GM12878 (cell line): ENCODE measurements at regions of chr5 and their contacts with region 1.

Region 1: DNA sequence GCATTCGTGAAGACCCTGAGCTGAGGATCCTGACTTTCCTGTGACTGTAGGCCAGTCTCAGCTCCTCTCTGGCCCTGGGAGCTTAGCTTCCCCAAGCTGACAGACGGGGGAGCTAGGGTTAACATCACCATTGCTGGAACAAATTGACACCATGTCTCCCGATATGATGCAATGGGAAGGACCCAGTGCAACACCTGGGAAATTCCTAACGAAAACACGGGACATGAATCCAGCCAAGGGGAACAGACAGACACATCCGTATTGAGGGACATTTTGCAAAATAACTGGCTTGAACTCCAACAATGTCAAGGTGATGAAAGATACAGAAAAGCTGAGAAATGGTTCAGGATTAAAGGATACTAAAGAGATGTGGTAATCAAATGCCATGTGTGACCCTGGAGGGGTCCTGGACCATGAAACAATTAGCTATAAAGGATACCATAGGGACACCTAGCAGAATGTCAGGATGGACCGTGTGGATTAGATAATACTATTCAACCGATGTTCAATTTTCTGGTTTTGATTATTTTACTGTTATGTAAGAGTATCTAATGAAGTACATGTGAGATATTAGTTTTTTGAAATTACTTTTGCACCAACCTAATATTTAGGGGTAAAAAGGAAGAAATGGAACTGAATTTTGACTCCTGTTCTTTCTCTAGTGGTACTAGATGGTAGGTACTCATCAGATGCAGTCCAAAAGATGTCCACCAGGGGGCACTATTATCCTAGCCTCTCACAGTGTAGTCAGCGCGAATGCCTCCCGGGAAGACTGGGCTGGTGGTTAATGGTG is 52.7 kb downstream of the NDST1 start:
- DNase-seq: peak; percentile 42
- ATAC-seq: peak; percentile 91
- H3K4me3 ChIP-seq: no peak overlapping the region
- H3K27ac ChIP-seq: no peak overlapping the region
- H3K4me1 ChIP-seq: peaks cover 14% of the 10 kb centered on the region
- H3K27me3 ChIP-seq: no peaks in the 10 kb centered on the region
- CTCF ChIP-seq: peak; percentile 75 to 89 (median 86)
- EP300 ChIP-seq: no peak
- POLR2A ChIP-seq: no peak
- RAD21 ChIP-seq: peak; percentile 96

Region 2: GRCh38 chr5:149824846-149825245 is 735.8 kb before region 1 on chr5:
- CTCF ChIA-PET with region 1: no interaction called
- POLR2A ChIA-PET with region 1: no interaction called
- RAD21 ChIA-PET with region 1: no interaction called
- SMC1A ChIA-PET with region 1: no interaction called
- in situ Hi-C with region 1: no loop called
- intact Hi-C with region 1: no loop called
- DNase-seq: no peak
- ATAC-seq: no peak
- H3K4me3 ChIP-seq: no peak overlapping the region
- H3K27ac ChIP-seq: no peak overlapping the region
- H3K4me1 ChIP-seq: no peaks in the 10 kb centered on the region; the same call in 1 of the 2 replicates
- H3K27me3 ChIP-seq: no peaks in the 10 kb centered on the region
- CTCF ChIP-seq: no peak
- EP300 ChIP-seq: no peak
- POLR2A ChIP-seq: no peak
- RAD21 ChIP-seq: no peak

Region 3: GRCh38 chr5:149895416-149896345 is 664.9 kb before region 1 on chr5:
- CTCF ChIA-PET with region 1: no interaction called
- POLR2A ChIA-PET with region 1: no interaction called
- RAD21 ChIA-PET with region 1: no interaction called
- SMC1A ChIA-PET with region 1: no interaction called
- in situ Hi-C with region 1: no loop called
- intact Hi-C with region 1: no loop called
- DNase-seq: no peak
- ATAC-seq: peak; percentile 52; the same call in 2 of the 3 replicates
- H3K4me3 ChIP-seq: no peak overlapping the region
- H3K27ac ChIP-seq: no peak overlapping the region
- H3K4me1 ChIP-seq: no peaks in the 10 kb centered on the region
- H3K27me3 ChIP-seq: no peaks in the 10 kb centered on the region
- CTCF ChIP-seq: no peak
- EP300 ChIP-seq: no peak
- POLR2A ChIP-seq: no peak
- RAD21 ChIP-seq: no peak

Region 4: DNA sequence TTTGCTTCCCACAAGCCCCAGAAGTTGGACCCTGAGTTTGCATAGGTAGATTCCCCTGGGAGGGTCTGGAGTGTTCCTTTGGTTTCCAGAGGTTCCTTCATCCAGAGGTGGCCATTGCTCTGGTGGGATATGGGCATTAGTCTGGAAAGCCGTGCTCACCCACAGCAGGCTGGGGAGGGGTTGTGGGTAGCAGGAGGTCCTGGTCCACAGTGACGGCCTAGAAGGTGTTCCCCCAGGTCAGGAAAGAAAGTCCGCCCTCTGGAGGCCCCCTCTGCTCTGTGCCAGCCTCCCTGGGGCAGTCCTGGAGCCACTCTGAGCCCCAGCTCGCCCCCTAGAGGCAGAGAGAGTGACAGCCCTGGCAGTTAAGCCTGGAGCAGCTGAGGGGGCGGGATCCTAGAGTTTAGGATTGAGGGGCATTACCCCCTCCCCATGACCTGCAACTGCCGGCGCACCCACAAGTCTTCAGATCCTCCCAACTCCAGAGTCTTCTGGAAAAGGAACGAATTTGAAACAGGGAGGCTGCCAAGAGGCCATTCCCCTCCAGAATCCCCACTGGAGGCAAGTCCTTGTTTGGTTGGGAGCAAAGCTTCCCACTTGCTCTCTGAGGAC is 15.9 kb before region 1 on chr5:
- CTCF ChIA-PET with region 1: interaction called, 22 read pairs
- POLR2A ChIA-PET with region 1: no interaction called
- RAD21 ChIA-PET with region 1: interaction called, 5 read pairs
- SMC1A ChIA-PET with region 1: interaction called, 7 read pairs
- in situ Hi-C with region 1: no loop called
- intact Hi-C with region 1: no loop called
- DNase-seq: peak; percentile 17
- ATAC-seq: peak; percentile 100
- H3K4me3 ChIP-seq: no peak overlapping the region
- H3K27ac ChIP-seq: no peak overlapping the region
- H3K4me1 ChIP-seq: no peaks in the 10 kb centered on the region
- H3K27me3 ChIP-seq: no peaks in the 10 kb centered on the region
- CTCF ChIP-seq: peak; percentile 96 to 99 (median 99); a peak in 5 of 6 replicates
- EP300 ChIP-seq: no peak
- POLR2A ChIP-seq: no peak
- RAD21 ChIP-seq: peak; percentile 87

Region 5: GRCh38 chr5:150656191-150657132 is 95.9 kb after region 1 on chr5:
- CTCF ChIA-PET with region 1: interaction called, 236 read pairs
- POLR2A ChIA-PET with region 1: interaction called, 3 read pairs
- RAD21 ChIA-PET with region 1: interaction called, 56 read pairs
- SMC1A ChIA-PET with region 1: interaction called, 61 read pairs
- in situ Hi-C with region 1: loop called (anchors 5 kb)
- intact Hi-C with region 1: loop called (anchors 1 kb)
- DNase-seq: peak; percentile 11
- ATAC-seq: peak; percentile 84
- H3K4me3 ChIP-seq: peak overlapping the region; percentile 70; the same call in 1 of the 2 replicates
- H3K27ac ChIP-seq: no peak overlapping the region
- H3K4me1 ChIP-seq: peaks cover 7% of the 10 kb centered on the region
- H3K27me3 ChIP-seq: no peaks in the 10 kb centered on the region; a peak in 2 of 4 replicates
- CTCF ChIP-seq: peak; percentile 43 to 78 (median 75); a peak in 5 of 6 replicates
- EP300 ChIP-seq: no peak
- POLR2A ChIP-seq: peak; percentile 60
- RAD21 ChIP-seq: peak; percentile 76

Region 6: DNA sequence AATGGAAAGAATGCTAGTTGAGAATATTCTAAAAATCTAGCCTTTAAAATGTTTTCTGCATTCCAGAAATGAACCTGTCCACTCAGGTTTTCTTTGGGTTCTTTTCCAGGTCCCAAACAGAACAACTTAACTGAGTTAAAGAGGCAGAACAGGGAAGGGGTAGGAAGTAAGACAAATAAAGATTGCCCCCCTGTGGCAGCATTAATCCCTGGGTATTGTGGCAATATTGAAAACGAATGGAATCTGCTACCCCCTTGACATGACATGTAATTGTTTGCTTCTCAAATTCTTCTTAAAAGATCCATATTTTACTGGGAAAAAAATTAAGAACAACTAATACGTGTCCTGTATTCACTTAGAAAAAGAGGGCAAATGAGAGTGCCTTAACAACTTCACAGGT is 149.6 kb after region 1 on chr5:
- CTCF ChIA-PET with region 1: interaction called, 21 read pairs
- POLR2A ChIA-PET with region 1: no interaction called
- RAD21 ChIA-PET with region 1: no interaction called
- SMC1A ChIA-PET with region 1: interaction called, 8 read pairs
- in situ Hi-C with region 1: no loop called
- intact Hi-C with region 1: no loop called
- DNase-seq: no peak
- ATAC-seq: peak; percentile 24; the same call in 1 of the 3 replicates
- H3K4me3 ChIP-seq: no peak overlapping the region
- H3K27ac ChIP-seq: no peak overlapping the region
- H3K4me1 ChIP-seq: no peaks in the 10 kb centered on the region
- H3K27me3 ChIP-seq: no peaks in the 10 kb centered on the region
- CTCF ChIP-seq: peak in 2 of 3 experiments; percentile 15 to 35; a peak in 2 of 6 replicates
- EP300 ChIP-seq: no peak
- POLR2A ChIP-seq: no peak
- RAD21 ChIP-seq: no peak; the same call in 1 of the 2 replicates

Region 7: GRCh38 chr5:150734579-150735384 is 174.2 kb after region 1 on chr5:
- CTCF ChIA-PET with region 1: interaction called, 14 read pairs
- POLR2A ChIA-PET with region 1: interaction called, 3 read pairs
- RAD21 ChIA-PET with region 1: interaction called, 8 read pairs
- SMC1A ChIA-PET with region 1: interaction called, 11 read pairs
- in situ Hi-C with region 1: no loop called
- intact Hi-C with region 1: no loop called
- DNase-seq: peak; percentile 53
- ATAC-seq: peak; percentile 96
- H3K4me3 ChIP-seq: no peak overlapping the region
- H3K27ac ChIP-seq: peak overlapping the region; percentile 67
- H3K4me1 ChIP-seq: peaks cover 14% of the 10 kb centered on the region
- H3K27me3 ChIP-seq: no peaks in the 10 kb centered on the region
- CTCF ChIP-seq: peak; percentile 10 to 21 (median 19); a peak in 3 of 6 replicates
- EP300 ChIP-seq: no peak
- POLR2A ChIP-seq: no peak
- RAD21 ChIP-seq: no peak

Region 8: GRCh38 chr5:150846654-150847333 is 286.2 kb after region 1 on chr5:
- CTCF ChIA-PET with region 1: interaction called, 90 read pairs
- POLR2A ChIA-PET with region 1: interaction called, 8 read pairs
- RAD21 ChIA-PET with region 1: interaction called, 43 read pairs
- SMC1A ChIA-PET with region 1: interaction called, 40 read pairs
- in situ Hi-C with region 1: loop called (anchors 5 kb)
- intact Hi-C with region 1: loop called (anchors 1 kb)
- DNase-seq: peak; percentile 67
- ATAC-seq: peak; percentile 97
- H3K4me3 ChIP-seq: peak overlapping the region; percentile 32; the same call in 1 of the 2 replicates
- H3K27ac ChIP-seq: no peak overlapping the region
- H3K4me1 ChIP-seq: peaks cover 7% of the 10 kb centered on the region
- H3K27me3 ChIP-seq: no peaks in the 10 kb centered on the region
- CTCF ChIP-seq: peak; percentile 49 to 92 (median 72); a peak in 5 of 6 replicates
- EP300 ChIP-seq: peak in 1 of 2 experiments; percentile 38; a peak in 1 of 4 replicates
- POLR2A ChIP-seq: no peak
- RAD21 ChIP-seq: peak; percentile 95